ENCODE measurements at regions of chr2 and their contacts with region 1.

Region 1: DNA sequence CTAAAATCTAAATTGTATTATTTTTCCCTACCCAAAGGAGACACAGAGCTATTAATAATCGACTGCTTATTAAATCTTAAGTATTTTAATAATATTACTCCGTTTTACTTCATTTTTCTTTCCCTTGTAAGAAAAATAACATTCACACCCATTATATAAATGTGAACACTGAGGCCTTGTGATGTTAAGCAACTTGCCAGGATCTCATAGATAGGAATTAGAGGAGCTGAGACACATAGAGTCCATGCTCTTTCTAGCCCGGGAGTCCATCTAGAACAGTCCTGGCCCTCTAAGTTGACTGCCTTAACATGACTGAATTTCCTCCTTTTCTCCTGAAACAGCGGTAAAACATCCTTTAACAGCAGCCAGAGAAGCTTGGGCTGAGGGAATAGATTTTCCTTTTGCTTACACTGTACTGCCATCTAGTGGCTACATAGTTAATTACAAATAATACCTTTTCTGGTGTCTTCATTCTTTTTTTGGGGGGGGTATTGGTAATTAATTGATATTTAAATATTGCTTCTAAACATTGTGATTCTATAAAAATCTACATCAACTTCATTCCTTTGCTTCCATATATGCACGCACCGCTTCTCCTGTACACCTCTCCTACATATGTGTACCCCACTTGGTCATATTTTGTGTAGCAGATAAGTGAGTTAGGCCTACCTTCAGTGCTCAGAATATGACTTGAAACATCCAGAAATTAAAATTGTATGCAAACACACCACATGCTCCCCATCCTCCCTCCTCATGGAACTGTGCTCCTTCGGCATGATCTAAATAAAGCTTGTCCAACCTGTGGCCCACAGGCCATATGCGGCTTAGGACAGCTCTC is 125.8 kb upstream of the HNMT start:
- DNase-seq: no peak
- ATAC-seq: peak; percentile 62
- H3K4me3 ChIP-seq: no peak overlapping the region
- H3K27ac ChIP-seq: no peak overlapping the region
- H3K4me1 ChIP-seq: no peaks in the 10 kb centered on the region
- H3K27me3 ChIP-seq: no peaks in the 10 kb centered on the region

Region 2: DNA sequence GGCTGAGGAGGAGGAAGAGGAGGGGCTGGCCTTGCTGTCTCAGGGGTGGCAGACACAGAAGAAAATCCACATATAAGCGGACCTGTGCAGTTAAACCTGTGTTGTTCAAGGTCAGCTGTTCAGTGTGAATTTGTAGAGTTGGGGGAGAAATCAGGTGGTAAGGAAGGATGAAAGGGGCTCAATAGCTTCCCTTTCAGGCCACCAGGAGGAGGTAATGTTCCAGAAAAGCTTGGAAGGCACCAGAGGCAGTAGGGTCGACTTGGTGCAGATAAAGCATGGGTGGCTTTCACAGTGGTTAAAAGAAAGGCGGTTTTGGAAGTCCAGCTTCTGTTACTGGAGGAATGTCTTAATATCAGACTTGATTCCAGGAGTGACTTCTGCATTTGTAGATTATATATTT is 905.8 kb before region 1 on chr2:
- intact Hi-C with region 1: loop called (anchors 5 to 10 kb)
- DNase-seq: no peak
- ATAC-seq: no peak
- H3K4me3 ChIP-seq: no peak overlapping the region
- H3K27ac ChIP-seq: no peak overlapping the region
- H3K4me1 ChIP-seq: no peaks in the 10 kb centered on the region
- H3K27me3 ChIP-seq: no peaks in the 10 kb centered on the region

Region 3: GRCh38 chr2:137192366-137193310 is 645.8 kb before region 1 on chr2:
- intact Hi-C with region 1: loop called in 1 of 2 experiments (anchors 10 kb)
- DNase-seq: no peak
- ATAC-seq: no peak
- H3K4me3 ChIP-seq: no peak overlapping the region
- H3K27ac ChIP-seq: no peak overlapping the region
- H3K4me1 ChIP-seq: no peaks in the 10 kb centered on the region
- H3K27me3 ChIP-seq: no peaks in the 10 kb centered on the region

Region 4: GRCh38 chr2:137715731-137716191 is 122.7 kb before region 1 on chr2:
- intact Hi-C with region 1: no loop called
- DNase-seq: no peak
- ATAC-seq: no peak
- H3K4me3 ChIP-seq: no peak overlapping the region
- H3K27ac ChIP-seq: no peak overlapping the region
- H3K4me1 ChIP-seq: no peaks in the 10 kb centered on the region
- H3K27me3 ChIP-seq: no peaks in the 10 kb centered on the region

Region 5: DNA sequence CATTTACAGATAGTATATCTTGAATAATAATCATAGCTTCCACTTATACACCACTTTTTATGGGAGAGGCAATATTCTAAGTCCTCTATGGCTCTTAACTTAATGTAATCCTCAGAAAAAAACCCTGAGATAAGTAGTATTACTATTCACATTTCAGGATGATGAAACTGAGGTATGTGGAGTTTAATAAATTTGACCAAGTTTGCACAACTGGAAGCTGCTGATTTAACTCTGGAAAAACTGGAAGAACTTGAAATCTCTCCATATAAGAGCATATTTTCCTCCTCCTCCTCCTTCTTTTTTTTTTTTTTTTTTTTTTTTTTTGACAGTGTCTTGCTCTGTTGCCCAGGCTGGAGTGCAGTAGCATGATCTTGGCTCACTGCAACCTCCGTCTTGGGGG is 75.0 kb before region 1 on chr2:
- intact Hi-C with region 1: no loop called
- DNase-seq: no peak
- ATAC-seq: no peak
- H3K4me3 ChIP-seq: no peak overlapping the region
- H3K27ac ChIP-seq: no peak overlapping the region
- H3K4me1 ChIP-seq: no peaks in the 10 kb centered on the region
- H3K27me3 ChIP-seq: no peaks in the 10 kb centered on the region

Measured in aorta (tissue), 5 donors.